Heart left ventricle (tissue), 16 donors: ENCODE measurements at regions of chr2 and their contacts with region 1.

Region 1: DNA sequence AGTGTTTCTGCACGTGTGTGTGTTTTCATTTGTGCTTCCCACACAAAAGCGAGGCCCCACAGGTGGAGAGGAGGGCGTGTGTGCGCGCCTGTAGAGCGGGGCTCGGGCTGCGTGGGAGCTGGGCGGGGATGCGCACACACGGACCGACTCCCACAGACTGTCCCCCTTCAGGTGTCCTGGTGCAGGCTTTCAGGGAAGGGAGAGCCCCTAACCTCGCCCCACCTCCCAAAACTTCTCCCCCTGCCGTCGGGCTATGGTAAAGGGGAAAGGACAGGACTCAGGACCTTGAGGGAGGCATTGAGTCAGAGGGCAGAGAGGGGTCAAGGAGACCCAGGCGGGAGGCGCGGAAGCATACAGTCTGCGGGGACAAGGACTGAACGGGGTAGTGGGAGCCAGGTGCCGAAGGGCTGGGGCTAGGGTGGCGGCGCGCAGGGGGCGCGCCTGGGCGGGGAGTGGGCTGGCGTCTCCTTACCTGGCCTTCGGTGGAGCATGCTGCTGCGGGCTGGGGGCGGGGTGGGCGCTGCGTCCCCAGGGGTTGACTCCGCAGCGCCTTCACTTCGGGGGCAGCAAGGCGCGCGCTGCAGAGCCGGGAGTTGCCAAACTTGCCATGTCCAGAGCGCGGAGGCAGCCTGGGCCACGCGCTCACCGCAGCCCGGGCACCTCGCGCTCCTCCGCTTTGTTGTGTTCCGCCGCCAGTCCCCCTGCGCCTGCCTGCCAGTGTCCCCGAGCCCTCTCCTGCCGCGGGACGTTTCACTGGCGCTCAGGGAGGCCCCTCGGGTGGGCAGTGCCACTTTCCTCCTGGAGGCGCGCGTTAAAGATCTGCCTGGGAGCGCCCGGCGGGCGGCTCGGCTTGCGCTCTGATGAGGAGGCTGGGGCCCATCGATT is 302.0 kb downstream of the NCKAP5 start:
- DNase-seq: peak in 1 of 5 donors; percentile 38
- ATAC-seq: peak; percentile 36 to 57 (median 50)
- H3K4me3 ChIP-seq: peak overlapping the region; percentile 26 to 60 (median 48)
- H3K27ac ChIP-seq: peak overlapping the region in 4 of 12 donors; percentile 15 to 46 (median 40)
- H3K4me1 ChIP-seq: peaks cover 0 to 27% (median 0%) of the 10 kb centered on the region in 12 donors
- H3K27me3 ChIP-seq: peaks cover 0 to 10% (median 0%) of the 10 kb centered on the region in 9 donors
- CTCF ChIP-seq: no peak
- POLR2A ChIP-seq: no peak

Region 2: DNA sequence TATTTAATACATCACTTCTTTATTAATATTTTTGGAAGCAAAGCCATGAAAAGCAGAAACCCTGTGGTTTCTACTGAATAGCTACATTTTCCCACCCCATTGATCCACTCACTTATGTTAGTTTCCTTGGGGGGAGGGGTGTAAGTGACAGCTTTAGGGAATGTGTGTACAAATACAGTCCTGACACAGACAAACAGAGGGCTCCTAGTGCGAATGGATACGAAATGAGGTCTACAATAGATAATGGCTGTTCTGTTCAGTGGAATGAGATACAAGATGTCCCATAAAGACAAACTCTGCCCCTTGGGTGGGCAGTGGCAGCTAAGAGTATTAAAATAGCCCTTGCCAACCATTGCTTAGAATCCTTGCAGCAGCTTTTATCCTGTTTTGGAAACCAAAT is 10.9 kb before region 1 on chr2:
- intact Hi-C with region 1: no loop called
- DNase-seq: no peak
- ATAC-seq: no peak
- H3K4me3 ChIP-seq: no peak overlapping the region
- H3K27ac ChIP-seq: no peak overlapping the region
- H3K4me1 ChIP-seq: no peaks in the 10 kb centered on the region
- H3K27me3 ChIP-seq: no peaks in the 10 kb centered on the region
- CTCF ChIP-seq: no peak
- POLR2A ChIP-seq: no peak

Region 3: GRCh38 chr2:133434962-133435668 is 168.8 kb after region 1 on chr2:
- intact Hi-C with region 1: loop called in 1 of 10 experiments (anchors 10 kb)
- DNase-seq: peak; percentile 57 to 85 (median 74)
- ATAC-seq: peak; percentile 96 to 99 (median 98)
- H3K4me3 ChIP-seq: no peak overlapping the region
- H3K27ac ChIP-seq: peak overlapping the region in 5 of 12 donors; percentile 15 to 64 (median 28)
- H3K4me1 ChIP-seq: peaks cover 0 to 23% (median 4%) of the 10 kb centered on the region in 12 donors
- H3K27me3 ChIP-seq: no peaks in the 10 kb centered on the region
- CTCF ChIP-seq: peak in 5 of 12 donors; percentile 11 to 27 (median 19)
- POLR2A ChIP-seq: no peak

Region 4: DNA sequence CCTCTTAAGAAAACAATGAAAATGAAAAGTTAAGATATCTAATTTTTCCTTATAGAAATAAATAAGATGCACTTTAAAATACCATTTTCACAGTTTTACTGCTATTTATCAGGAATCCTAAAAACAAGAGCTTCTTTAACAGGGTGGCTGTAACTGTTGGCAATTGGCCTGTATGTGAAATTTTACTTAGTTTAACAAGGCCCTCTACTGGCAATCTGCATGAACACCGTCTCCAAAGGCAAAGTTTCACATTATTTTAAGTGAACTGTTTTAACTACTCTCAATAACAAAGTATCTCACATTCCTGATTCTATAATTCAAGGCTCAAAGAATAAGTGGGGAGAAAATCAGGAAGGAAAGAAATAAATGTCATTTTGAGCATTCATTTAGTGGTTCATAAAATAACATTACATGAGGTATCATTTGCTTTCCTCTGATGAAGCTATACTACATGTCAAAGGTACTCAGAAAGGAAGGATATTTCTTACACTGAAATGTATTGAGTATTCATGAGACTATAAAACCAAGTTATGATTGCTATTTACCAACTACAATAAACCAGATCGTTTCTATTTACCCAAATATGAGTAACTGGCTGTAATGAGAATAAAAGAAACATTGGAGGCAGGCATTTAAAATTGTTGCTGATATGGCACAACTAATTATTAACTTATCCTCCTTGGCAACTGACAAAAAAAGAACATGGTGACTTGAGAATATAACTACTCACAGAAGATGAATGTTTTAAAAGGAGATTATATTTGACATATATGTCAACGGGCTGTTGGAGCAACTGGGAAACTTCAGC is 295.0 kb after region 1 on chr2:
- intact Hi-C with region 1: loop called in 7 of 10 experiments (anchors 5 to 10 kb)
- DNase-seq: no peak
- ATAC-seq: peak in 2 of 4 donors; percentile 58 to 62
- H3K4me3 ChIP-seq: no peak overlapping the region
- H3K27ac ChIP-seq: no peak overlapping the region
- H3K4me1 ChIP-seq: peaks cover 0 to 9% (median 2%) of the 10 kb centered on the region in 12 donors
- H3K27me3 ChIP-seq: no peaks in the 10 kb centered on the region
- CTCF ChIP-seq: peak; percentile 23 to 72 (median 62)
- POLR2A ChIP-seq: no peak